Activated B cell treated with CpG ODN at 0.5 μM for 24 hours (primary cell): ENCODE measurements at regions of chr14 and their contacts with region 1.

Region 1: DNA sequence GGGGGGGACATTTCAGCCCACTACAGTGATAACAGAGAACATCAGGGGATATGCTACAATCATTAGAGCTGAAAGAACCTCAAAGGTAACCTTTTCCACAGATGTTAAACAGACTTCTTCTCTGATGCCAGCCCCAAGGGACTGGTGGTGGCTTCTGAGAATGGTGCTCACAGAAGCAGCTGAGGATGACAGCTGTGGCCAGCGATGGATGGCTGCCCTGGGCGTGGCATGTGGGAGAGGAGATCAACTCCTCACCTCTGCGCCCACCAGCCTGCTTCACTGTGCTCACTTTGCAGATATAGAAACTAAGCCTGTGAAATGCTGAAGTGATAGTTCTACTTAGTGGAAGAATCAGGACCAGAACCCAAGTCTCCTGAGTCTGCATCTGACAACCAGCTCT is 33.0 kb downstream of the FOXN3 start:
- DNase-seq: peak; percentile 79
- ATAC-seq: peak; percentile 95
- H3K4me3 Mint-ChIP-seq: peak overlapping the region; percentile 36
- H3K27ac Mint-ChIP-seq: peak overlapping the region; percentile 87
- H3K4me1 Mint-ChIP-seq: peaks cover 79% of the 10 kb centered on the region
- H3K27me3 Mint-ChIP-seq: no peaks in the 10 kb centered on the region
- CTCF ChIP-seq: no peak

Region 2: GRCh38 chr14:89264196-89264800 is 119.7 kb before region 1 on chr14:
- CTCF ChIA-PET with region 1: interaction called, 3 read pairs
- POLR2A ChIA-PET with region 1: interaction called, 3 read pairs
- intact Hi-C with region 1: loop called (anchors 1 kb)
- DNase-seq: no peak
- ATAC-seq: peak; percentile 90
- H3K4me3 Mint-ChIP-seq: peak overlapping the region; percentile 75
- H3K27ac Mint-ChIP-seq: peak overlapping the region; percentile 94
- H3K4me1 Mint-ChIP-seq: peaks cover 73% of the 10 kb centered on the region
- H3K27me3 Mint-ChIP-seq: no peaks in the 10 kb centered on the region
- CTCF ChIP-seq: no peak

Region 3: DNA sequence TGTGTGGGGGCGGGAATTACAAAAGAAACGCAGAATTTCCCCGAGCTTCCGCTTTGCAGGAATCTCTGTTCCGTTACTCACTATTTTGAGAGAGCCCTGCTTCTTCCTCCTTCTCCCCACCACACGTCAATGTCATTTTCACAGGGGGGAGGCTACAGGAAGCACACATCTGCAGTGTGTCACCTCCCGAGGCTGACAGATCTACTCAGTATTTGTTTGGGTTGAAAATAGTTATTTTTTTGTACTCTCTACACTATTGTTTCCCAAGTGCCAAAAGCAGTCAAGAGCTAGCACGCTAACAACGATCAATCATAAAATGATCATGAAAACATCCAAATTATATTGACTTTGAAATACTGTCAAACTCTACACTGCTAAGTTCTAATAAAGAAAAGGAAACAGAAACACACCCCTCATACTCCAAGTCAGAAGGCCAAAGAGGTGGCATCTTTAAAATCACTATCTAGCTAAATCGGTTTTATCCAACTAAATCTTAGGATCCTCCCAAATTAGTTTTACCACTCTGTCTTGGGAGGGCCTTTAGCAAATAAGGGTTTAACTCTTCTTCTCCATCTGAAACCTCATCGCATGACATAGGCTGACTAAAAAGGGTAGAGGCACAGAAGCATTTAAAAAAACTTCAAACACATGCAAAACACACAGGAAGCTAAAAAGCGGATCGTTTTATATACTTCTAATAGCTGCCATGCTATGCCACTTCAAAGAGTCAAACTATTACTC is 18.8 kb before region 1 on chr14:
- CTCF ChIA-PET with region 1: interaction called, 8 read pairs
- POLR2A ChIA-PET with region 1: interaction called, 43 read pairs
- intact Hi-C with region 1: loop called (anchors 1 kb)
- DNase-seq: peak; percentile 43
- ATAC-seq: peak; percentile 93
- H3K4me3 Mint-ChIP-seq: peak overlapping the region; percentile 80
- H3K27ac Mint-ChIP-seq: peak overlapping the region; percentile 94
- H3K4me1 Mint-ChIP-seq: peaks cover 67% of the 10 kb centered on the region
- H3K27me3 Mint-ChIP-seq: no peaks in the 10 kb centered on the region
- CTCF ChIP-seq: no peak

Region 4: DNA sequence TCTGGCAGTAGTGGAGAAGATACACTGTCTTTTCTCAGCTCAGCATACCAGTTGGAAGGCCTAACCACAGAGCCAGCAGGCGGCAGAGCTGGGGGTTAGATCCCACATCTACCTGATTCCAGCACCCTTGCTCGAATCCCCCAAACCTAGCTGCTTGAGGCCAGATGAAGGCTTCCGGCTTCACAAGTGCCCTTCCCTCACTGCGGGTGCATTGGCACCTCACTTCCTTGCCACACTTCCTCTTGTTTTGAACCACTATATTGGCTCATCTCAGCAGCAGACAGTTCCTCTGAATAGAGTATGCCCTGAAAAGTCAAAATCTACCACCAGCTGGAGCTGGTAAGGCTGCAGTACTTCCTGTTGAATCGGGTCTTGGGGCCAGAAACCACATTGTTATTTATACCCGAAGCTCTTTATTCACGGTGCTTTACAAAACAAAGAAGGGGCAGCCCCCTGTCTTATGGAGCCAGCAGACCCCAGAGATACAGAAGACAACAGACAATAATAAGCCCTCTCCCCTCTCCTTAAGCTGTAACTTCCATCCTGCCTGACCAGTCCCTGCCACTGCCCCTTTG is 336.8 kb after region 1 on chr14:
- CTCF ChIA-PET with region 1: no interaction called
- POLR2A ChIA-PET with region 1: interaction called, 5 read pairs
- intact Hi-C with region 1: loop called (anchors 1 kb)
- DNase-seq: peak; percentile 45
- ATAC-seq: peak; percentile 90
- H3K4me3 Mint-ChIP-seq: peak overlapping the region; percentile 69
- H3K27ac Mint-ChIP-seq: peak overlapping the region; percentile 95
- H3K4me1 Mint-ChIP-seq: peaks cover 66% of the 10 kb centered on the region
- H3K27me3 Mint-ChIP-seq: no peaks in the 10 kb centered on the region
- CTCF ChIP-seq: no peak